ENCODE measurements at regions of chr3 and their contacts with region 1.

Region 1: GRCh38 chr3:14921078-14921616 is 26.2 kb upstream of the NR2C2 start:
- DNase-seq: peak; percentile 75 to 81
- ATAC-seq: peak; percentile 84 to 88
- H3K4me3 ChIP-seq: no peak overlapping the region
- H3K27ac ChIP-seq: no peak overlapping the region
- H3K4me1 ChIP-seq: no peaks in the 10 kb centered on the region
- CTCF ChIP-seq: peak; percentile 95
- EP300 ChIP-seq: no peak
- POLR2A ChIP-seq: no peak
- RAD21 ChIP-seq: peak; percentile 97

Region 2: GRCh38 chr3:14203521-14204079 is 717.5 kb before region 1 on chr3:
- CTCF ChIA-PET with region 1: interaction called, 21 read pairs
- POLR2A ChIA-PET with region 1: no interaction called
- DNase-seq: peak; percentile 79
- ATAC-seq: peak; percentile 84 to 92
- H3K4me3 ChIP-seq: no peak overlapping the region
- H3K27ac ChIP-seq: no peak overlapping the region
- H3K4me1 ChIP-seq: no peaks in the 10 kb centered on the region
- CTCF ChIP-seq: peak; percentile 86
- EP300 ChIP-seq: no peak
- POLR2A ChIP-seq: no peak
- RAD21 ChIP-seq: peak; percentile 83 to 86

Region 3: DNA sequence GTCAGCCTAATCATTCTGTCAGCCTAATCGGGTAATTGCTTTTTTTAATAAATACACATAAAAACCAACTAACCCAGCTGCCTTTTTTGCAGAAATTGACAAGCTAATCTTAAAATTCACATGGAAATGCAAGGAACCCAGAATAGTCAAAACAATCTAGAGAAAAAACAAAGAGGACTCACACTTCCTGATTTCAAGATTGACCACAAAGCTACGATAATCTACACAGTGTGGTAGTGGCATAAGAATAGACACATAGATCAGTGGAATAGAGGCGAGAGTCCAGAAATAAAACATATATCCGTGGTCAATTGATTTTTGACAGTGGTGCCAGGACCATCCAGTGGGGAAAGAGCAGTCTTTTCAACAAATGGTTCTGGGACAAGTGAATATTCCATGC is 248.6 kb before region 1 on chr3:
- CTCF ChIA-PET with region 1: interaction called, 119 read pairs
- POLR2A ChIA-PET with region 1: no interaction called
- DNase-seq: no peak
- ATAC-seq: no peak
- H3K4me3 ChIP-seq: no peak overlapping the region
- H3K27ac ChIP-seq: no peak overlapping the region
- H3K4me1 ChIP-seq: no peaks in the 10 kb centered on the region
- CTCF ChIP-seq: no peak
- EP300 ChIP-seq: no peak
- POLR2A ChIP-seq: no peak
- RAD21 ChIP-seq: no peak

Region 4: DNA sequence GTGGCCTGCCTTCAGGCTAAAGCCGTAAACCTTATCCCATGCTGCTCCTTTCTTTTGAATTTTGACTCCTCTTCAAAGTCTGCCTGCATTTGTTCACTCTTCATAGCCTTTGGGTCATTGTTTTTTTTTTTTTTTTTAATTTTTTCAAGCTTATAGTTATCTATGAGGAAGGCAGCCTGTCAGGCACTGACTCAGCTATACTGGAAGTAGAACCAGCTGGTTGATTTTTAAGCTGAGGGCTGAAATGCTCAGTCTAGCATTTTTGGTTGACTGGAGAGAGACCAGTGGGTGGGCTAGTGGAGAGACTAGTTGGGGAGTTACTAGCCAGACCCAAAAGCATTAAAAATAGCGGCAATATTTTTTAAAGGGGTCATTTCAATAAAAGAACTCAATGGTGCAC is 202.1 kb before region 1 on chr3:
- CTCF ChIA-PET with region 1: no interaction called
- POLR2A ChIA-PET with region 1: no interaction called
- DNase-seq: no peak
- ATAC-seq: no peak
- H3K4me3 ChIP-seq: no peak overlapping the region
- H3K27ac ChIP-seq: no peak overlapping the region
- H3K4me1 ChIP-seq: no peaks in the 10 kb centered on the region
- CTCF ChIP-seq: no peak
- EP300 ChIP-seq: no peak
- POLR2A ChIP-seq: no peak
- RAD21 ChIP-seq: no peak

Region 5: GRCh38 chr3:14791343-14791945 is 129.7 kb before region 1 on chr3:
- CTCF ChIA-PET with region 1: interaction called, 160 read pairs
- POLR2A ChIA-PET with region 1: no interaction called
- DNase-seq: peak; percentile 62 to 76
- ATAC-seq: peak; percentile 73 to 94
- H3K4me3 ChIP-seq: no peak overlapping the region
- H3K27ac ChIP-seq: no peak overlapping the region
- H3K4me1 ChIP-seq: no peaks in the 10 kb centered on the region
- CTCF ChIP-seq: peak; percentile 78
- EP300 ChIP-seq: no peak
- POLR2A ChIP-seq: no peak
- RAD21 ChIP-seq: peak; percentile 81 to 87

Region 6: GRCh38 chr3:14890476-14890875 is 30.7 kb before region 1 on chr3:
- CTCF ChIA-PET with region 1: interaction called, 12 read pairs
- POLR2A ChIA-PET with region 1: no interaction called
- DNase-seq: no peak
- ATAC-seq: no peak
- H3K4me3 ChIP-seq: no peak overlapping the region
- H3K27ac ChIP-seq: no peak overlapping the region
- H3K4me1 ChIP-seq: no peaks in the 10 kb centered on the region
- CTCF ChIP-seq: no peak
- EP300 ChIP-seq: no peak
- POLR2A ChIP-seq: no peak
- RAD21 ChIP-seq: no peak

Region 7: DNA sequence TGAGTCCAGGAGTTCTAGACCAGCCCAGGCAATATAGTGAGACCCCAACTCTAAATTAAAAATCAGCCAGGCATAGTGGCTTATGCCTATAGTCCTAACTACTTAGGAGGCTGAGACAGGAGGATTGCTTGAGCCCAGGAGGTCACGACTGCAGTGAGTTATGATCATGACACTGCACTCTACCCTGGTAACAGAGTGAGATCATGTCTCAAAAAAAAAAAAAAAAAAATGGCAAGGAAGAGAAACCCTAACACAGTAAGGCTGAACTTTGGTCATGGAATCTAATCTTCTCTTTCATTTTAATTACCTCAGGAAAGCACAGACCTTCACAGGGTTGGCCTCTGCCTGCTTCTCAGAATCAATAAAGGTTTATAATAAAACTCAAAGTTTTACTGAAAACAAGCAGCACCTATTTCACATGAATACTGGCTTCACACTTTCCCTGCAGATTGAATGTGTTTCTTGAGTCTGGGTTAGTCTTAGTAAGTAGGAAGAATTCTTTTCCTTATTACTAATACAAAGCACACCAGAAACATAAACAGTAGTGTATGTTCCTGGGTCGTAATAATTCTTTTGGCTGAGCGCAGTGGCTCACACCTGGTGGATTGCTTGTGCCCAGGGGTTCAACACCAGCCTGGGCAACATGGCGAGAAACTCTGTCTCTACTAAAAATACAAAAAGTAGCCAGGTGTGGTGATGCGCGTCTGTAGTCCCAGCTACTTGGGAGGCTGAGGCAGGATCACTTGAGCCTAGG is 14.6 kb after region 1 on chr3:
- CTCF ChIA-PET with region 1: interaction called, 14 read pairs
- POLR2A ChIA-PET with region 1: no interaction called
- DNase-seq: no peak
- ATAC-seq: no peak
- H3K4me3 ChIP-seq: no peak overlapping the region
- H3K27ac ChIP-seq: no peak overlapping the region
- H3K4me1 ChIP-seq: no peaks in the 10 kb centered on the region
- CTCF ChIP-seq: no peak
- EP300 ChIP-seq: no peak
- POLR2A ChIP-seq: no peak
- RAD21 ChIP-seq: no peak